Activated CD8-positive, alpha-beta T cell treated with anti-CD3 and anti-CD28 coated beads, Interleukin-2, amount 10 ng/mL, durations not matched to agents 7 days and 5 days (primary cell): ENCODE measurements at regions of chr16 and their contacts with region 1.

Region 1: DNA sequence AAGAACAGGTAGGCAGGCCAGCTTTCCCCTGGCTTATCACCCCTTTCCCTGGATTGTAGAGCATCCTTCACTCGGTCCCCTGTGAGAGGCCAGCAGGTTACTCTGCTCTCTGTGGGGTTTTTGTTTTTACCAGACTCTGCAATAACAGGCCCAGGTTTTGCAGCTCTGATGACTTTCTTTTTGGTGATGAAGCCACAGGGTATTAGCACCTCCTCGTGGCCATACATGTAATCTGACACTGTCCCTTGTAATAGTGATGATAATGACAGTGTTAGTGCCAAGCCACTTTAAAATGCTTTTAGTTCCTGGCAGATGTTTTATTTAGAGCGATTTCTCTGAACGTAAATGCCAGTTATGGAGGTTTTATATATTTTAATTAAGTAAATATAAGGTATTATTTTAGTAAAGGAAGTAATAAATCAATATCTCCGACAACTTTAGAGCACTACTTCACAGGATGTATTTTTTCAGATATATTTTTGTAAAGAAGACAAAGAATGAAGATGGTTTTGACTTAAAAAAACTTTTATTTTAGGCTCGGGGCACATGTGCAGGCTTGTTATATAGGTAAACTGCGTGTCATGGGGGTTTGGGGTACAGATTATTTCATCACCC is 38.0 kb upstream of the CPHXL start:
- DNase-seq: peak; percentile 74
- ATAC-seq: peak; percentile 96
- H3K4me3 Mint-ChIP-seq: no peak overlapping the region
- H3K27ac Mint-ChIP-seq: no peak overlapping the region
- H3K4me1 Mint-ChIP-seq: no peaks in the 10 kb centered on the region
- H3K27me3 Mint-ChIP-seq: peaks cover 14% of the 10 kb centered on the region

Region 2: GRCh38 chr16:75471723-75472633 is 292.3 kb before region 1 on chr16:
- CTCF ChIA-PET with region 1: interaction called, 24 read pairs
- POLR2A ChIA-PET with region 1: no interaction called
- DNase-seq: peak; percentile 52
- ATAC-seq: peak; percentile 80
- H3K4me3 Mint-ChIP-seq: no peak overlapping the region
- H3K27ac Mint-ChIP-seq: no peak overlapping the region
- H3K4me1 Mint-ChIP-seq: no peaks in the 10 kb centered on the region
- H3K27me3 Mint-ChIP-seq: no peaks in the 10 kb centered on the region

Region 3: DNA sequence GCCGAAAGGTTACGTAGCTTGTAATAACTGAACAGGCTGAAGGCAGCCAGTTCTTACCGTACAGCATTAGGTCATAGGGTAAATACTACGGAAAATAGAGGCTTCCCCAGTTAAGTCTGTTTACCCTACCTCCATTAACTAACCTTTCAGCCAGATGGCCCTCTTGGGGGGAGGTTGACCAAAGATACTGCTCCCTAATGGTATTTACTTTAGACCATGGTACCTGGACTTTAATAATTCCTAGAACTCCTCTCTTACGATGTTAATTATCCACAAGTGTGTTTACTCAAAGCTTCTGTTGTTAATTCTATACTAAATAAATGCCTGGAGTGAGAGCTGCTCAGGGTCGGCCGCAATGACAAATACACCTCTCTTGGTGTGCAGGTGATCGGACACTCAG is 131.4 kb before region 1 on chr16:
- CTCF ChIA-PET with region 1: no interaction called
- POLR2A ChIA-PET with region 1: no interaction called
- DNase-seq: no peak
- ATAC-seq: no peak
- H3K4me3 Mint-ChIP-seq: no peak overlapping the region
- H3K27ac Mint-ChIP-seq: no peak overlapping the region
- H3K4me1 Mint-ChIP-seq: peaks cover 31% of the 10 kb centered on the region
- H3K27me3 Mint-ChIP-seq: no peaks in the 10 kb centered on the region

Region 4: DNA sequence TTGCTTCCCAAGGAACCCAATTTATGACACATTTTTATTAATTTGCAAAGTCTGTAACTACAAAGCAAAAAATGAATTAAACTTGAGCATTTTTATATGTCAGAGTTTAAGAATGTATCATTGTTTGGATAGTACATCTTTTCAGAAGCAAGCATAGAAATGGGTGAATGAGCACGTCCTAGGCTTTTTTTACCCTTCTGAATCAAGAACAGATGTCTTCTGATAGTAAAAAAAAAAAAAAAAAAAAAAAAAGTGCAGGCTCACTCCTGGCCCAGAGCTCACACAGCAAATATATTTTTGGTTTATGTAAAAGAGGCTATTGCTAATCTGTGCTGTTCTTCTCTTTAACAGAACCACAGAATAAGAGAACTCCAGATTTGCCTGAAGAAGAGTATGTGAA is 110.3 kb before region 1 on chr16:
- CTCF ChIA-PET with region 1: interaction called, 10 read pairs
- POLR2A ChIA-PET with region 1: interaction called, 10 read pairs
- DNase-seq: no peak
- ATAC-seq: no peak
- H3K4me3 Mint-ChIP-seq: no peak overlapping the region
- H3K27ac Mint-ChIP-seq: peak overlapping the region; percentile 58
- H3K4me1 Mint-ChIP-seq: peaks cover 38% of the 10 kb centered on the region
- H3K27me3 Mint-ChIP-seq: no peaks in the 10 kb centered on the region

Region 5: DNA sequence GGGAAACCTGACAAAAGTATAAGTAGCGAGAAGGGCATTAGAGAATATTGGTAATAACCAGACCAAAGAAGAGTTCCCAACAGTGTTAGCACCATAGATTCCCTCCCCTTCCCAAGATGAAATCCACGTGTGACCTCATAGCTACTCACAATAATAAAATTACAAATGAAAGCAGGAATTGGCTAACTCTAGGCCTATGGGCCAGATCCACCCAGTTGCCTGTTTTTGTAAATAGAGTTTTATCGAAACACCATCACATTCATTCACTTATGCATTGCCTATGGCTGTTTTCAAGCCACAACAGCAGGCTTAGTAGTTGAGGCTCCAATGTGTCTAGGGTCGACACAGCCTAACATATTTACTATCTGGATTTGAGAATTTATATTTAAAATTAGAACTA is 45.8 kb before region 1 on chr16:
- CTCF ChIA-PET with region 1: no interaction called
- POLR2A ChIA-PET with region 1: no interaction called
- DNase-seq: no peak
- ATAC-seq: no peak
- H3K4me3 Mint-ChIP-seq: no peak overlapping the region
- H3K27ac Mint-ChIP-seq: no peak overlapping the region
- H3K4me1 Mint-ChIP-seq: no peaks in the 10 kb centered on the region
- H3K27me3 Mint-ChIP-seq: no peaks in the 10 kb centered on the region

Region 6: GRCh38 chr16:75868636-75869632 is 104.7 kb after region 1 on chr16:
- CTCF ChIA-PET with region 1: no interaction called
- POLR2A ChIA-PET with region 1: no interaction called
- DNase-seq: no peak
- ATAC-seq: no peak
- H3K4me3 Mint-ChIP-seq: no peak overlapping the region
- H3K27ac Mint-ChIP-seq: no peak overlapping the region
- H3K4me1 Mint-ChIP-seq: no peaks in the 10 kb centered on the region
- H3K27me3 Mint-ChIP-seq: no peaks in the 10 kb centered on the region